SK-N-SH (cell line): ENCODE measurements at regions of chr6 and their contacts with region 1.

Region 1: DNA sequence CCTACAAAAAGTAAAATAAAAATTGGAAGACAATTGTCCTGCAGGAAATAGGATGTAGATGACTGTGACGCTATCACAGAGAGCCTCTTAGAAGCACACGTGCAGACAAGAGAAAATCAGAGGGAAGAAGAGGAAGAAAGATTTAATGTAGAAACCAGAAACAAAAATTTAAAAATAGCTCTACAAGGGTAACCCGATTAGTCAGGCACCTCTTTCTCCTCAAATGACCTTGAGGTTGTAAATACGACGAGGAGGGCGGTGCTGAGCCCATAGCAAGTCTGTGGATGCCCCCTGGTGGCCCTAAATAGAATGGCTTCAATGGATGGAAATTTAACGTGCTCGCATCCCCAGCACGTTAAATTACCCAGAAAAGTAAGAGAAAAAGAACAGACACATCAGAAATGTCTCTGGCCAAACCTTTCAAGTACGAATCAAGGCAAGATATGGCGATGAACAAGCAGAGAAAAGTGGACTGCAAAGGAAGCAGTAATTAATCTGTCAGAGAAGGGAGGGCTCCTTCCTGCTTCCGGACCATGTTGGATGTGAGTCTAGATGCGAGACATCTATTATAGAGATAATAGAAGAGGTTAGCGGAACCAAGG is 4.2 kb upstream of the PRPH2 start:
- DNase-seq: peak; percentile 86
- H3K4me3 ChIP-seq: peak overlapping the region in 1 of 2 experiments; percentile 10; a peak in 1 of 4 replicates
- H3K27ac ChIP-seq: peak overlapping the region; percentile 4 to 49; a peak in 2 of 4 replicates
- H3K4me1 ChIP-seq: peaks cover 0 to 7% of the 10 kb centered on the region in 2 experiments; a peak in 1 of 4 replicates
- H3K27me3 ChIP-seq: no peaks in the 10 kb centered on the region
- CTCF ChIP-seq: peak; percentile 92
- EP300 ChIP-seq: no peak
- RAD21 ChIP-seq: peak; percentile 92

Region 2: DNA sequence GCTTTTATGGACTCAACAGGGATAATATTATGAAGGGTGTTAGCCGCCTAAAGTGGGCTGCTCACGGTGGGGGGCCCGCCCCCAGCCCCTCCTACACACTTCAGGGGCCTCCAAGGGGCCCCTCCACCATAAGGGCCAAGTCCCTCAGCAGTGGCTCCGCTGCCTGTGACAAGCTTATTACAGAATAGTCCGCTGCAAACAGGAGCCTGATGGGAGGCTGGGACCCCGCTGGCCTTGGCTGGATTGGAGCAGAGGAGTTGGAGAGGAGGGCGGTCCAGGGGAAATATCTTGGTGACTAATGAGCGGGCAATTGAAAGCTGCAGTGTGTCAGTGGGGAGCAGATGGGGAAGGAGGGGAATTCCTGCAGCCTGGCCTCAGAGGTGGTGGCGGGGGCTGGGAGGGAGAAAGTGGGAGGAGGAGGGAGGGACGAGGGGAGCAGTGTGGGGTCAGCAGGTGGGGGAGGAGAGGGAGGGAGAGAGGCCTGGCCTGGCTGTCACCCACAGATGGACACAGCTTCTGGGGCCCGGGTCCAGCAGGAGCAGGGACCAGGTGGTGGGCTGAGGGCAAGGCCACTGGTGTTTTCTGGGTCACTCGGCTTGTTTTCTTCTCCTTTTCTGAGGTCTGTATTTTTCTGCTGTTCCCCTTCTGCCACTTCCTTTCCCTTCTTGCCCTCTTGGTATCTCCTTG is 1238.0 kb before region 1 on chr6:
- CTCF ChIA-PET with region 1: no interaction called
- POLR2A ChIA-PET with region 1: no interaction called
- DNase-seq: peak; percentile 63
- H3K4me3 ChIP-seq: no peak overlapping the region; a peak in 2 of 4 replicates
- H3K27ac ChIP-seq: peak overlapping the region; percentile 30 to 67; a peak in 3 of 4 replicates
- H3K4me1 ChIP-seq: peaks cover 18 to 42% of the 10 kb centered on the region in 2 experiments; a peak in 3 of 4 replicates
- H3K27me3 ChIP-seq: no peaks in the 10 kb centered on the region
- CTCF ChIP-seq: no peak
- EP300 ChIP-seq: peak in 1 of 2 experiments; percentile 21; a peak in 1 of 4 replicates
- RAD21 ChIP-seq: no peak; the same call in 1 of the 2 replicates

Region 3: GRCh38 chr6:42661540-42662153 is 64.9 kb before region 1 on chr6:
- CTCF ChIA-PET with region 1: interaction called, 58 read pairs
- POLR2A ChIA-PET with region 1: no interaction called
- DNase-seq: peak; percentile 65
- H3K4me3 ChIP-seq: no peak overlapping the region; a peak in 1 of 4 replicates
- H3K27ac ChIP-seq: no peak overlapping the region
- H3K4me1 ChIP-seq: no peaks in the 10 kb centered on the region
- H3K27me3 ChIP-seq: no peaks in the 10 kb centered on the region
- CTCF ChIP-seq: peak; percentile 96
- EP300 ChIP-seq: no peak
- RAD21 ChIP-seq: peak; percentile 90

Region 4: DNA sequence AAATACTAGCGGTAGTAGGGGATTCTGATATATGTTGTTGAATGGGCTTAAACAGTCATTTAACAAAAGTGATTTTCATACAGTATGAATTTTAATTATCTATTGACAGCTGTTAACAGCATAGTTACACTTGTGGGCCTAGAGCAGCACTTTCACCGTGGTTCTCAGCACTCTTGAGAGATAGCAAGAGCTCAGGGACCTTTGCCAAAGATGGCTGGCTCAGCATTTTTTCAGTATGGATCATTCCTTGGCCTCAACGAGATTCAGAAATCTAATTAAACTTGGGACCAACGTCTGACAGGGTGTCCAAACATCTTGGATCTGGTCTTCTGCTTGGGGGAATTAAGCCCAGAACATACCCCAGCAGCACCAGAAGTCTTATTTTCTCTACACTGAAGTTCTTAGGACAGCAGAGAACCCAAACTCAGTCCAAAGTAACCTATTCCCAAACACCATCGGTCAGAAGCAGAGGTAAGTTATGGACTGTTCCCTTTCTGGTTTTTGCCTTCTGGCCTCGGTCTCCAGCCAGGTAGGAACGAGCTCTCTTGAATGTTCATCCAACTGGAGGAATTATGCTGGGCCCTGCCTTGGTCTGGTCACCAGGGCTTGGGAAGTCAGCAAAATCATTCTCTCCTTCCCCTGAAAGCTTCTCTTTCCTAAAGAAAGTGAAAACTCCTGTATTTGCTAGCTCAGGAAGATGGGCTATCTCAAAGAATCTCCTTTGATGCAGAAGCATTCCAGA is 29.9 kb before region 1 on chr6:
- CTCF ChIA-PET with region 1: interaction called, 17 read pairs
- POLR2A ChIA-PET with region 1: no interaction called
- DNase-seq: no peak
- H3K4me3 ChIP-seq: no peak overlapping the region
- H3K27ac ChIP-seq: no peak overlapping the region
- H3K4me1 ChIP-seq: peaks cover 4 to 8% of the 10 kb centered on the region in 2 experiments
- H3K27me3 ChIP-seq: no peaks in the 10 kb centered on the region
- CTCF ChIP-seq: no peak
- EP300 ChIP-seq: no peak
- RAD21 ChIP-seq: no peak

Region 5: DNA sequence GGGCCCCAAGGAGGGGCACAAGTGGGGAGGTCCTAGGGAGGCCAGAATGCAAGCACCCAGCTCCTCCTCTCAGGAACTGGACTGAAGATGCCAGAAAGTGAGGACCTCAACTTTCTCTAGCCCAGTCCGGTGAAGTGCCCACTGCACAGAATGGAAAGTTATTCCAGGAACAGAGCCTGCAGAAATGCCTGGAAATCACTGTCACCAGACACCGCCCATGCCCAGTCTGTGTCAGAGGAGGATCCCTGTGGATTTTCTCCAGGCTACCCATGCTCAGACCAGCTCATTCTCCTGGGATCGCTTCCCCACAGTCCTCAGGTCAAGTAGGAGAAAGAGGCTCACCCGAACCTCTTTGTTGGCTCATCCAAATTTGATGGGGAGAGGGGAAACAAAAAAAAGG is 10.7 kb before region 1 on chr6:
- CTCF ChIA-PET with region 1: interaction called, 17 read pairs
- POLR2A ChIA-PET with region 1: no interaction called
- DNase-seq: no peak
- H3K4me3 ChIP-seq: no peak overlapping the region
- H3K27ac ChIP-seq: no peak overlapping the region
- H3K4me1 ChIP-seq: no peaks in the 10 kb centered on the region
- H3K27me3 ChIP-seq: no peaks in the 10 kb centered on the region
- CTCF ChIP-seq: no peak
- EP300 ChIP-seq: no peak
- RAD21 ChIP-seq: no peak

Region 6: DNA sequence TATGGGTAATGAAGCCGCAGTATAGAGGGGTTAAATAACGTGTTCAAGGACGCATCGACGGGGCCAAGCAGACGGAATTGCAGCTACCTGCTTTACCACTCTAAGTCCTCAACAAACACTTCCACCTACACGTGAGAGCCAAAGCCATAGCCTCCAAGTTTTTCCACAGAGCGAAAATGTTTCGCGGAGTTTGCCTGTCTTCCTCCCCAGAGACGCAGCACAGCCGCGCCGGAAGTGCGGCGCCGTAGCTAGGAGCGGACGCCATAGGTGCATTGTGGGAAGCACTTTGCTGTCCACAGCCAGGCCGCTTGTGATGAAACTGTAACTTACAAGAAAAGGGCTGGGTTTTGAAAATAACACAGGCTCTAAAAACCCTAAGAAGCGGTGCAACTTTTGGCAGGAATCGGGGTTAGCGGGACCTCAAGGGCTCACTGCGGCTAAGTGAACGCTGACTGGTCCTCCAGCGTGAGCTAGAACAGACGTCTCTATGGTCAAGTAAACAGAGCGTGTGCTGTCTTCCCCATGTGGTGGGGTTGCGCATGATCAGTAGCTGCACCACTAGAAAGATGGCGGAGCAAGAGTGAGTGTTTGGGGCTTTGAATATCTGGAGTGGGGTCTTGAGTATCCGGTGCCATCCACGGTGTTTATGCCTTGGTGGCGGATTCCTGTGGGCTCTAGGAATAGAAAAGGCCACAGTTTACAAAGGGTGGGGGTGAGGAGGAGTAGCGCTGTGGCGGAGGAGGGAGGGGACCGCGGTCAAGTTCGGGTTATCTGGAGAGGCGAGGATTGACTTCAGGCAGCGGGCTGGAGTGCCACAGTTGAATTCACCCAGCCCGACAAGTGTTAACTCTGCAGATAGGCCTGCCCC is 153.0 kb after region 1 on chr6 and contains the start of gene RPL7L1:
- CTCF ChIA-PET with region 1: interaction called, 12 read pairs
- POLR2A ChIA-PET with region 1: interaction called, 5 read pairs
- DNase-seq: peak; percentile 75
- H3K4me3 ChIP-seq: peak within 1 kb of the TSS; percentile 74 to 87
- H3K27ac ChIP-seq: peak within 1 kb of the TSS; percentile 89 to 94
- H3K4me1 ChIP-seq: peaks cover 0 to 3% of the 10 kb centered on the region in 2 experiments; a peak in 1 of 4 replicates
- H3K27me3 ChIP-seq: no peaks in the 10 kb centered on the region
- CTCF ChIP-seq: no peak
- EP300 ChIP-seq: peak in 1 of 2 experiments; percentile 7; a peak in 1 of 4 replicates
- RAD21 ChIP-seq: no peak
- polyA plus RNA-seq, gene RPL7L1: 22.1 and 28.7 TPM in 2 replicates

Region 7: DNA sequence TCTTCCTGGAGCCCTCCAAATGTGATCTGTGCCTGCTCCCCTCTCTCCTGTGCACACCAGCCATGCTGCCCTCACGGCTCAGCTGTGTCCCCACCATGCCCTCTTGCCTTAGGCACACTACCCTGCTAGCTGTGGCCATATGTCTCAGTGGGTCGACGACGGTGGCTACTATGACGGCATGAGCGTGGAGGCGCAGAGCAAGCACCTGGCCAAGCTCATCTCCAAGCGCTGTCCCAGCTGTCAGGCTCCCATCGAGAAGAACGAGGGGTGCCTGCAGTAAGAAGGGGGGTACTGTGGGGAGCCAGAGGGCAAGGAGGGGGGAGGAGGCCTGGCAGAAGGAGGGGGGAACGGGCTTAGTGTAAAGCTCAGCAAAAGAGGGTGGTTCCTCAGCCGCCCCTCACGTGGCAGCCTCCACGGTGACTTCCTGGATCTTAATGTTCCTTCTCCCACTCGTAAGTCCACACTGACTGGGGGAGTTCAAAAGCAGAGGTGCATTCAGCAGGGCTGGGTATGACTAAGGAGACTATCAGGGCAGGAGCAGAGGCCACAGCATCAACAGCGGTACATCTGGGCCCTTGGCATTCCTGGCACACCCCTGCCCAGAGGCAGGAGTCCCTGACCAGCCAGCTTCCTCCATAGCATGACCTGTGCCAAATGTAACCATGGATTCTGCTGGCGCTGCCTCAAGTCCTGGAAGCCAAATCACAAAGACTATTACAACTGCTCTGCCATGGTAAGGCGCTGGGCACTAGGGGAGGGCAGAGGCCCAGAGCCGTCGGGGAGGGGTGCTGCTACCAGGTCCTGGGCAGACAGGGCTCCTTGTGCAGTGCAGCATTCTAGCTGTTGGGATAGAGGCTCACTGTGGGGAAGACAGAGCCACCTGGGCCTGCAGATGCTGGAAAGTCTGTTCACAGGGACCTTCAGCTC is 494.7 kb after region 1 on chr6:
- CTCF ChIA-PET with region 1: no interaction called
- POLR2A ChIA-PET with region 1: no interaction called
- DNase-seq: no peak
- H3K4me3 ChIP-seq: no peak overlapping the region
- H3K27ac ChIP-seq: no peak overlapping the region
- H3K4me1 ChIP-seq: peaks cover 0 to 5% of the 10 kb centered on the region in 2 experiments; a peak in 1 of 4 replicates
- H3K27me3 ChIP-seq: no peaks in the 10 kb centered on the region
- CTCF ChIP-seq: no peak
- EP300 ChIP-seq: no peak
- RAD21 ChIP-seq: no peak